H1 (cell line): ENCODE measurements at regions of chr15 and their contacts with region 1.

Region 1: GRCh38 chr15:44738340-44738984 is 2.1 kb downstream of the TRIM69 start:
- DNase-seq: no peak
- H3K4me3 ChIP-seq: no peak overlapping the region
- H3K27ac ChIP-seq: no peak overlapping the region
- H3K4me1 ChIP-seq: no peaks in the 10 kb centered on the region
- H3K27me3 ChIP-seq: no peaks in the 10 kb centered on the region
- CTCF ChIP-seq: peak in 2 of 3 experiments; percentile 39 to 42; a peak in 2 of 4 replicates
- EP300 ChIP-seq: no peak
- POLR2A ChIP-seq: no peak
- RAD21 ChIP-seq: peak; percentile 73 to 77

Region 2: DNA sequence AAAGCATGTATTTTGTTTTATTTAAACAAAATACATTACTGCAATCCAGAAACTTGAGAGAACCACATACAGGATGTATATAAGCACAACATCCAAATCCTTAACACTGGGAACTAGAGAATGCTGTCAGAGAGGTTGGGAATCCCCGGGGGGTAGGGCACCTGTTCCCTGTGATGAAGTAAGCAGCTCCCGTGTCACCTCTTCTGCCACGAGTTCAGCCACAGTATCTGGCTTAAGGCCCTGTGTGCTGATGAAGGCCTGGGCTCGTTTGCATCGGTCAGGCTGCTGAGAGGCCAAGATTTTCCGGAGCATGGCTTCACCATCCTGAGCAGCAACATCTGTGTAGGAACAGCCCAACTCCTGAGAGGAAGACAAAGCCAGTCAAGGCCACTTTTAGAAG is 165.1 kb before region 1 on chr15:
- CTCF ChIA-PET with region 1: interaction called, 12 read pairs
- POLR2A ChIA-PET with region 1: interaction called, 4 read pairs
- DNase-seq: no peak
- H3K4me3 ChIP-seq: no peak overlapping the region
- H3K27ac ChIP-seq: no peak overlapping the region
- H3K4me1 ChIP-seq: no peaks in the 10 kb centered on the region
- H3K27me3 ChIP-seq: no peaks in the 10 kb centered on the region
- CTCF ChIP-seq: no peak
- EP300 ChIP-seq: no peak
- POLR2A ChIP-seq: no peak
- RAD21 ChIP-seq: no peak

Region 3: GRCh38 chr15:44584162-44584749 is 154.2 kb before region 1 on chr15:
- CTCF ChIA-PET with region 1: interaction called, 10 read pairs
- POLR2A ChIA-PET with region 1: no interaction called
- DNase-seq: peak; percentile 21 to 70
- H3K4me3 ChIP-seq: no peak overlapping the region
- H3K27ac ChIP-seq: no peak overlapping the region
- H3K4me1 ChIP-seq: no peaks in the 10 kb centered on the region
- H3K27me3 ChIP-seq: no peaks in the 10 kb centered on the region
- CTCF ChIP-seq: peak; percentile 69 to 88 (median 75)
- EP300 ChIP-seq: no peak
- POLR2A ChIP-seq: no peak
- RAD21 ChIP-seq: peak; percentile 54 to 69

Region 4: DNA sequence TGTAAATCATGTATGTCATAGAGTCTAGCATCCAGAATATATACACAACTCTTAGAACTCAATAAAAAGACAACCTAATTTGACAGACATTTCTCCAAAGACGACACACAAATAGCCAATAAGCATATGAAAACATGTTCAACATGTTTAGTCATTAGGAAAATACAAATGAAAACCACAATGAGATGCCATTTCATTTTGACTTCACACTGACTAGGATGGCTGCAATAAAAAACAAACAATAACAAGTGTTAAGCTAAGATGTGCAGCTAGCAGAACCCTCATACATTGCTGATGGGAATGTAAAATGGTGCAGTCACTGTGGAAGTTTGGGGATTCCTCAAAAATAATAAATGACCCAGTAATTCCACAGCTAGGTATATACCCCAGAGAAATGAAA is 91.4 kb before region 1 on chr15:
- CTCF ChIA-PET with region 1: no interaction called
- POLR2A ChIA-PET with region 1: no interaction called
- DNase-seq: no peak
- H3K4me3 ChIP-seq: no peak overlapping the region
- H3K27ac ChIP-seq: no peak overlapping the region
- H3K4me1 ChIP-seq: no peaks in the 10 kb centered on the region
- H3K27me3 ChIP-seq: no peaks in the 10 kb centered on the region
- CTCF ChIP-seq: no peak
- EP300 ChIP-seq: no peak
- POLR2A ChIP-seq: no peak
- RAD21 ChIP-seq: no peak

Region 5: GRCh38 chr15:44711356-44712107 is 26.9 kb before region 1 on chr15 and contains the start of gene B2M:
- CTCF ChIA-PET with region 1: interaction called, 61 read pairs
- POLR2A ChIA-PET with region 1: interaction called, 17 read pairs
- DNase-seq: peak; percentile 83 to 96
- H3K4me3 ChIP-seq: peak within 1 kb of the TSS; percentile 79 to 95 (median 88)
- H3K27ac ChIP-seq: peak within 1 kb of the TSS; percentile 60; the same call in 1 of the 2 replicates
- H3K4me1 ChIP-seq: 0 out of 7 replicates have a peak, but pooled peaks cover 0 to 3% (median 0%) of the 10 kb centered on the region in 4 experiments
- H3K27me3 ChIP-seq: peaks cover 0 to 10% (median 8%) of the 10 kb centered on the region in 4 experiments; a peak in 5 of 7 replicates
- CTCF ChIP-seq: no peak
- EP300 ChIP-seq: no peak
- POLR2A ChIP-seq: peak; percentile 93 to 97
- RAD21 ChIP-seq: no peak
- total RNA-seq, gene B2M: 71.2 and 78.9 TPM in 2 replicates